ENCODE measurements at regions of chr15 and their contacts with region 1.

Region 1: DNA sequence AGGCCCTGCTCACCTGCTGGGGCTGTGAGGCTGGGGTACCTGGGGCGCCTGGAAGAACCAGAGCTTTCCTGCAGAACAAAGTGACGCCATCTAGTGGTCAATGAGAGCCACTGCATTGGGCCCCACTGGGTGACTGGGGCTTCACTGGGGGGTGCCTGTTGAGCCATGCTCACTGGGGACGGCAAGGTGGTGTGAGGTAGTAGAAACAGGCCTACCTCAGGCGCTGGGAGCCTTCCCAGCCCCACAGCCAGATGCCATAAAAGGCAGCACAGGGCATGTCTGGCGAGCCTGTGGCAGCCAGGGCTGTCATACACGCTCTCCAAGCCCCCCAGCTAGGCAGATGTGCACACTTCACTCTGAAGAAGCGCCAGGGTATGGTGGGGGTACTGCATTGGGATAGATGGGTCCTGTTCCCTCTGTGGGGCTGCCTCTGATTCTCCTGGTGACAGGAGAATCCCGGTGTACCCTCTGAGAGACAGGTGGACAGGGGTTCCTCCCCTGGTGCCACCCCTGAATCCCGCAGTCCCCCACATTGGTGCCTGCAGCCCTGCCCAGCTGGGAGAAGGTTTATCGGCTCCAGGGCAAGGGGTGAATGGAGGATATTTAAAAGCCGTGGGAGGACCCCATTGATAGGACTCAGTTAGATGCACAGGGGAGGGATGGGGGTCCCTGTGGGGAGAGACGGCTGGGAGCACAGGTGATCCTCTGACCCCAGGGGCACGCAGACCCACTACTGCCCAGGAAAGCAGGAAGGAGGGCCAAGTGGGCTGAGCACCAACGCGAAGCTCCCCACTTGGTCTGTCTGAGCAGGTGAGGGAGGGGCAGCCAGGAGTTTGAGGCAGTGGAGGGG is 178.8 kb downstream of the NSMCE3 start:
- DNase-seq: no peak
- H3K4me3 Mint-ChIP-seq: no peak overlapping the region
- H3K27ac Mint-ChIP-seq: no peak overlapping the region
- H3K4me1 Mint-ChIP-seq: no peaks in the 10 kb centered on the region
- H3K27me3 Mint-ChIP-seq: peaks cover 1% of the 10 kb centered on the region

Region 2: DNA sequence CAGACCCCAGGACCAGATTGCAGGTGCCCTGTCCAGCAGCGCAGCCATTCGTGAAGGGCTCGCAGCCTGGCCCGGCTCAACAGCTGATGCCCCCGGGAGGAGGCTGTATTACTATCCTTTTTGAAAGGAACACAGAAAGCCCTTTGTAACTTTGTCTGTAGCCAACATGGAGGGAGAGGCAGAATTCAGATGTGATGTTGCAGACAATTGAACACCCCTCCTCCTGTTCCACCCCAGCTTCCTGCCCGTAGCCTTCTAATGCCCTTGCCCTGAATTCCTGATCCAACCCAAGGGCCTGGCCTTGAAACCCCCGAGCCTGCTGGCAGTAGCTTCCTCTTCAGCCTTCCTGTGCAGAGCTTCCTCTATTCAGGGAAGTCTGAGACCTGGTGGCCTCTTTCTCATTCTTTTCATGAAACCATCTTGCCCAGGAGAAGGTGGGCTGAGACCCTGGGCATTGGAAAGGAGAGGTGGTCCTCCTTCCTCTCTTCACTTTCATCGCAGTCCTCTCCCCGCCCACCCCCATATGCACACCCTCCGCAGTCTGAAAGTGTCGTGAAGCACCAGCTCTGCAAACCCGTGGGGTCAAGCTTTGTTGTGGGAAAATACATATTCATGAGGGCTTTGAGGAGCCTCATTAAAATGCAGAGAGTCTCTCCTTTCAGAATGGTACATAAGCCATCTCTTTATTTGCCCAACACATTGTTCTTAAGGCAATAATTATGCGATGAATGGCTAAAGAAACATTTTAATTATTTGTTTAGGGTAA is 95.8 kb before region 1 on chr15:
- intact Hi-C with region 1: loop called (anchors 5 kb)
- DNase-seq: no peak
- H3K4me3 Mint-ChIP-seq: no peak overlapping the region
- H3K27ac Mint-ChIP-seq: no peak overlapping the region
- H3K4me1 Mint-ChIP-seq: peaks cover 23% of the 10 kb centered on the region
- H3K27me3 Mint-ChIP-seq: peaks cover 4% of the 10 kb centered on the region